Thyroid gland (tissue), 4 donors: ENCODE measurements at regions of chr16 and their contacts with region 1.

Region 1: DNA sequence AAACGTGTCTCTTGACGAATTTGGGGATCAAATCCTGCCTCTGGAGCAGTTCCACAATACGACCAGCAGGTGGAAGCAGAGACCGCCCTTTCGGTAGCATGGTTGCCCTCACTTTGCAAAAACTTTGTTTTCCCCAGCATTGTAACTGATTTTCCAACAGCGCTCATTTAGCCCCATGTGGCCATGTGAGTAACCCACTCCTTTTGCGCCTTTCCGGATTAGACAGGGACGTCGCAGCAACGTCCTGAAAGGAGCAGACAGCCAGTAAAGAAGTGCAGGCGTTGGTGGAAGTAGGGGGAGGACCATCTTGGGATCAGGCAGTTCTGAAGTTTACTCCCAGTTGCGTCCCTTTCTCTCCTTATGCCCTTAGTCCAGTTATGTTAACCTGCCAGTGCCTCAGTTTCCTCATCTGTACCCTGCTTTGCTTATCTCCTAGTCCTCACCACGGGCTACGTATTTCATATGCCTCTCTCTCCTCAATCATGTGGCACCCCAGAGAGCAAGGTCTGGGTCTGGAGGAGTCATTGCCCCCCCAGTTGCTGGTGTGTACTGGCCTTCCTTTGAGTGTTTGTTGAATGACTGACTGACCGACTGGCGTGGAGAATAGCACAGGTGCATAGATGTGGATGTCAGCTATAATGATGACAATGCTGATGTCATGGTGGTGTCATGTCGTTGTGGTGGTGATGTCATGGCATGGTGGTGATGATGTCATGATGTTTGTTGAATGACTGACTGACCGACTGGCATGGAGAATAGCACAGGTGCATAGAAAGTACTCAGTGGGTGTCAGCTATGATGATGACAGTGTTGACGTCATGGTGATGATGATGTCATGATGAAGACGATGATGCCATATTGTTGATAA is 22.3 kb downstream of the TMEM114 start:
- DNase-seq: peak; percentile 65 to 71
- H3K4me3 ChIP-seq: no peak overlapping the region
- H3K27ac ChIP-seq: no peak overlapping the region
- H3K4me1 ChIP-seq: peaks cover 0 to 3% of the 10 kb centered on the region in 2 donors
- H3K27me3 ChIP-seq: no peaks in the 10 kb centered on the region
- CTCF ChIP-seq: peak; percentile 93 to 99 (median 98)
- POLR2A ChIP-seq: no peak

Region 2: GRCh38 chr16:8458481-8459046 is 109.4 kb before region 1 on chr16:
- intact Hi-C with region 1: no loop called
- DNase-seq: no peak
- H3K4me3 ChIP-seq: no peak overlapping the region
- H3K27ac ChIP-seq: no peak overlapping the region
- H3K4me1 ChIP-seq: no peaks in the 10 kb centered on the region
- H3K27me3 ChIP-seq: no peaks in the 10 kb centered on the region
- CTCF ChIP-seq: no peak
- POLR2A ChIP-seq: no peak

Region 3: DNA sequence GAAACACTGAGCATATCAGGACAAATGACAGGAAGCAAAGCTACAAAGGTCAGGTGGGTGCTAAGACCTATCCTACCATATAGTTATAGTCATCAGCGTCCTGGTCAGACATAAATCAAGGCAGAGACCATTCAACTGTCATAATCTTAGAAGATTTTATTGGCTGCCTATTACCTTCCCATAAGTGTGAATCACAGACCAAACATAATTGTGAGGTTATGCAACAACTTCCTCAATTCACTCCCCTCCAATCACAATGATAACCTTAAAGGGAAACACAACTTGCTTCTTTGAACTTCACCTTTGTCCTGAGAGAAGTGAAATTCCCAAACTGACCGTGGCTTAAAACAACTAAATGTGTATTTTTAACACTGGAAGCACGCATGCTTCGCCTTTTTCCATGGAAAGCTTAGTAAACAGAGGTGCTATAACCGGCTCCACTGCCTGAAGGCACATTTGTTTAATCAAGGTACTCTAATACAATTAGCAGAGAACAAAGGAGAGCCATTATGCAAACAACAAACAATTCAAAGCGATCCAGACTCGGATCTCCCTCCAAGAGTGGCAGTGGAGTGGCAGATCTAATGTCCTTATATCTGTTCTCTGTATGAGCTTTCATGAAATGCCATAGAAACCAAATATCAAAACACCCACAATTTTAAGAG is 62.5 kb before region 1 on chr16:
- intact Hi-C with region 1: no loop called
- DNase-seq: no peak
- H3K4me3 ChIP-seq: no peak overlapping the region
- H3K27ac ChIP-seq: no peak overlapping the region
- H3K4me1 ChIP-seq: no peaks in the 10 kb centered on the region
- H3K27me3 ChIP-seq: no peaks in the 10 kb centered on the region
- CTCF ChIP-seq: no peak
- POLR2A ChIP-seq: no peak

Region 4: GRCh38 chr16:8818504-8819270 is 250.7 kb after region 1 on chr16:
- intact Hi-C with region 1: no loop called
- DNase-seq: no peak
- H3K4me3 ChIP-seq: no peak overlapping the region
- H3K27ac ChIP-seq: no peak overlapping the region
- H3K4me1 ChIP-seq: peaks cover 0 to 2% of the 10 kb centered on the region in 2 donors
- H3K27me3 ChIP-seq: no peaks in the 10 kb centered on the region
- CTCF ChIP-seq: no peak
- POLR2A ChIP-seq: no peak

Region 5: DNA sequence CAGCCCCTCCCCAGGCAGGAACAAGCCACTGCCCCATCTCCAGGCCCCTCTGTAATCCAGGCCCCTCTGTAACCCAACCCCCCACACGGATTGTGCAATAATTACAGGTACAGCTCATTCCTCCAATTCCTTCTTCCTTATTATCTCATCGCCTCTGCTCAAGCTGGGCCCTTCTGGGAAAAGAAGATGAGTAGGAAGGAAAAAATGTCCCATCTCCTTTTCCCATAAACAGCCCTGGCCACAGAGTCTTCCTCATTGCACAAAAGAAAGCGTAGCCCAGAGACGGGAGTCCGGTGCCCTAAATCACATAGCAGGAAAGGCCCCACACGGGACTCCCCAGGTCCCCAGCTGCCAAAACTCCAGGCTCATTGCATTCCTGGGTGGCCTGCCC is 310.5 kb after region 1 on chr16:
- intact Hi-C with region 1: loop called (anchors 5 kb)
- DNase-seq: no peak
- H3K4me3 ChIP-seq: no peak overlapping the region
- H3K27ac ChIP-seq: no peak overlapping the region
- H3K4me1 ChIP-seq: peaks cover 0 to 4% of the 10 kb centered on the region in 2 donors
- H3K27me3 ChIP-seq: no peaks in the 10 kb centered on the region
- CTCF ChIP-seq: no peak
- POLR2A ChIP-seq: no peak

Region 6: GRCh38 chr16:8892101-8892575 is 324.2 kb after region 1 on chr16:
- intact Hi-C with region 1: loop called (anchors 5 kb)
- DNase-seq: no peak
- H3K4me3 ChIP-seq: no peak overlapping the region
- H3K27ac ChIP-seq: no peak overlapping the region
- H3K4me1 ChIP-seq: peaks cover 0 to 3% of the 10 kb centered on the region in 2 donors
- H3K27me3 ChIP-seq: no peaks in the 10 kb centered on the region
- CTCF ChIP-seq: no peak
- POLR2A ChIP-seq: no peak